ENCODE measurements at regions of chr6 and their contacts with region 1.

Region 1: GRCh38 chr6:2634139-2634964 is 116.4 kb downstream of the MYLK4 start:
- DNase-seq: peak; percentile 95

Region 2: DNA sequence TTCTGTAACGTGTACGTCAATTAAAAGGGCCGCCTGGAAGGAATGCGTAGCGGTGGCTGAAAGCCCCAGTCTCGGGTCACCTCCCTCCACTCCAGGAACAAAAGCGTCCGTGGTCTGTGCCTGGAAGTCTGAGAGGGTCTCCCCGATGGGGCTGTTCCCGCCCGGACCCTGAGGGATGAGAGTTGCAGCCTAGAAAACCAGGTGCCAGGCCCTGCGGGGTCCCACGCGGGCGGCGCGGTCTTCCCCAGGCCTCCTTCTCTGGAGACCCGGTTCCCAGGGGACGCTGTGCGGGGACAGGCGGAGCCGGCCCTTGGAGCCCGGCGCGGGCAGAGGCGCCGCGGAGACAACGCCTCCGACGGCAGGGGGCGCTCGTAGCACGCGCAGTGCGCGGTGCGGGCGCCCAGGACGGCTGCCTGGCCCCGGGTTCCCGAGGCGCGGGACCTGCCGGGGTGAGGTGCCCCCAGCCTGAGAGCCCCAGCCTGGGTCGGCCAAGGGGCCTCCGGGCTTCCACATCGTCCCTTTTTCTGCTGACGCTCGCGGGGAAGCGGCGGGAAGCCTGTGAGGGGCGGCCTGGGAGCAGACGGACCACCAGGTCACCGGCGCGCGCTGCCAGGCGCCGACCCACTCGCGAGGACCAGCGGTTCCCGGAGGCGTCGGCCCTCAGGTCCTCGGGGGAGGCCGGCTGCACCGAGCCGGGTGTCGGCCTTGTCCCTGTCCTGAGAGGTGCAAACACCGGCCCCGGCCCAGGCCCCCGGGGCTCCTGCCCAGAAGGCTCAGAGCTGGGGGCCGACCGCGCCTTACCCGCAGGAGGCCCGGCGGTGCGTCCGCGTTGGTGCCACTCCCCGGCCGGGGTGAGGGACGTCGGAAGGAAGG is 1030.0 kb before region 1 on chr6:
- intact Hi-C with region 1: loop called (anchors 2 kb)
- DNase-seq: peak; percentile 88

Region 3: GRCh38 chr6:1709234-1709641 is 925.1 kb before region 1 on chr6:
- intact Hi-C with region 1: no loop called
- DNase-seq: peak; percentile 81

Region 4: DNA sequence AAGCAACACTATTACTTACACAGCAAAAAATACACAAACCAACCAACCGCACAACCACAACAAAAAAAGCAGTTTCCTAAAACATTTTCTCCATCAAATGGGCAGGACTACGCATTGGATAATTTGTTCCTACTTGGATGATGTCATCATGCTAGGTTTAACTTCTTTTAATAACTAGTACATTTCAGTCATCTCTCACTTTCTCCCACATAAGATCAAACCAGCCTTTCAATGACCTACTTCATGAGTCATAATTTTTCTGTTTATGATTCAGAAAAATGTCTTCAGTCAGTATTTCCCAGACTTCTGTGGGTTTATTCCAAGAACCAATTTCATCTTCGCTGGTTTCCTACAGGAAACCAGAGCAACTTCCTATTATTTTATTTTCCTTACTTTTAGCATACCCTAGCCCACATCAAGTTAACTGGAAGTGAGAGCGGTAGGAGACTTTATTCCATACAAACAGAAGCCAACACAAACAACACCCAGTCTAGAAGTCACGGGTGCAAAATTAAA is 523.1 kb before region 1 on chr6:
- intact Hi-C with region 1: loop called (anchors 10 kb)
- DNase-seq: no peak

Region 5: DNA sequence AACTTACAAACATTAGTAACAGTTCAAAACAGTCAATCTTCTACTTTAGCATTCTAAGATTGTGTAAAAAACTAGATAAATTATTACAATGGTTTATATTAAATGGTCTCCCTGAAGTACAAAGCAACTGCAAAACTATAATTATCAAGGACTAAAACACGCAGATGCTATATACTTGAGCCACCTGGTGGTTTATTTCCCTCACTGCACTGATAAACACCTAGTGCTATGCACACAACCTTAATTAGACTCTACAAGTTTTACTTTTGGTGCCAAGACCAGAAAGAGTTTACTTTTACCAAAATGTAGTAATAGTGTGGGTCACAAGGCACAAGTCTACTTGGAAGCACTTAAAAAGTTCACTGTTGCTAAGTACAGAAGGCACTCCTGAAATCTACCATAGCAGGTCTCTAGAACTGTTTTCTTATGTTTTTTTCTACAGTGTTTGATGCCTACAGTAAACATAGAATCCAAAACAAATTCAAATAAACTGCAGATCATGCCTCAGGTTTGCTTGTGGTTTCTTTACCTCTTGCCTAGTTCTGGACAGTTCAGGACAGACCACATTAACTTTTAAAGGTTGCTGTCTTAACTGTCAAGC is 438.2 kb before region 1 on chr6:
- intact Hi-C with region 1: loop called (anchors 10 kb)
- DNase-seq: no peak

Region 6: GRCh38 chr6:2353412-2354137 is 280.8 kb before region 1 on chr6:
- intact Hi-C with region 1: loop called (anchors 10 kb)
- DNase-seq: peak; percentile 80

Region 7: GRCh38 chr6:2448820-2449571 is 185.4 kb before region 1 on chr6:
- intact Hi-C with region 1: loop called (anchors 5 kb)
- DNase-seq: no peak

Region 8: GRCh38 chr6:2760882-2761842 is 126.8 kb after region 1 on chr6:
- intact Hi-C with region 1: no loop called
- DNase-seq: no peak

Region 9: GRCh38 chr6:2853761-2854395 is 219.5 kb after region 1 on chr6:
- intact Hi-C with region 1: no loop called
- DNase-seq: no peak

Measured in cardiac septum (tissue), 1 donor.